AG04449 (cell line): ENCODE measurements at regions of chr18 and their contacts with region 1.

Region 1: GRCh38 chr18:73842795-73843394 is 304.7 kb downstream of the FBXO15 start:
- DNase-seq: peak; percentile 5
- H3K4me3 ChIP-seq: no peak overlapping the region
- CTCF ChIP-seq: peak; percentile 87

Region 2: GRCh38 chr18:72762515-72763122 is 1080.3 kb before region 1 on chr18:
- CTCF ChIA-PET with region 1: interaction called, 10 read pairs
- POLR2A ChIA-PET with region 1: no interaction called
- DNase-seq: peak; percentile 33
- H3K4me3 ChIP-seq: no peak overlapping the region
- CTCF ChIP-seq: peak; percentile 46

Region 3: GRCh38 chr18:73793386-73793785 is 49.5 kb before region 1 on chr18:
- CTCF ChIA-PET with region 1: interaction called, 12 read pairs
- POLR2A ChIA-PET with region 1: no interaction called
- DNase-seq: peak; percentile 21
- H3K4me3 ChIP-seq: no peak overlapping the region
- CTCF ChIP-seq: no peak

Region 4: GRCh38 chr18:73827801-73828200 is 15.1 kb before region 1 on chr18:
- CTCF ChIA-PET with region 1: interaction called, 35 read pairs
- POLR2A ChIA-PET with region 1: no interaction called
- DNase-seq: no peak
- H3K4me3 ChIP-seq: no peak overlapping the region
- CTCF ChIP-seq: no peak

Region 5: GRCh38 chr18:73859837-73860397 is 17.0 kb after region 1 on chr18:
- CTCF ChIA-PET with region 1: interaction called, 10 read pairs
- POLR2A ChIA-PET with region 1: no interaction called
- DNase-seq: no peak
- H3K4me3 ChIP-seq: no peak overlapping the region
- CTCF ChIP-seq: no peak